T-cell (primary cell): ENCODE measurements at regions of chr3 and their contacts with region 1.

Region 1: DNA sequence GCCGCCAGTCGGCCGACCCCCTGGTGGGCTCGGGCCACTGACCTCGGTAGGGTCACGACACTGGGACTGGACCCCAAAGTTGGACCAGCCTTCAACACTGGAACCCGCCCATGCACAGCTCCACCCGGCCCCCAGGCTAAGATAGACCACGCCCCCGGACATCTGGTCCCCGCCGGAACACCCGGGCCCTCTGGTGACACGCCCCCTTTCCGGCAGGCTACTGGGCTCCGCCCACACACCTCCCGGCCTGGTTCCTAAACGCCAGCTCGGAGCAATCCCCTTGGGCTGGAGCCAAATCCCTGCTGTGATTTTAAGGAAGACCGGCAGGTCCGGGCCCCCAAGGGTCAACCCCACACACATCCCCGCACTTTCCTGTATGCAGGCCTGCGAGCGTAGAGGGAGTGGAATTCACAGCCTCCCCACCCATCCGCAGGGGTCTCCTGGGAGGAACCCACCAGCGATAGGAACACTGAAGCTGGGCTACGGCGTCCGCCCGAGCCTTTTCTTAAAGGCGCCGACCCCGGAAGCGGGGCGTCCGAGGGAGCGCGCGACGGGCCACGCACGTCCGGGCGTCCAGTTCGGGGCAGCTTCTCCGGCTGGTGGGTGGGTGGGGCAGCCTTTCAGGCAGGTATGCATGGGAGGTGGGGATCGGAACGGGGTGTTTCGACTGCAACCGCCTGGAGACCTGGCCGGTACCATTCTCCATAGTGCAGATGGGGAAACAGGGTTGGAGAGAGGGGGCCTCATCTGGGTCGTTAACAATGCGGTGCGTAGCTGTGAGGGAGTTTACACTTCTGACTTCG is at the start of gene HEMK1:
- DNase-seq: peak; percentile 74 to 94 (median 86)
- ATAC-seq: peak; percentile 58 to 69 (median 64)
- H3K4me3 ChIP-seq: peak within 1 kb of the TSS; percentile 90 to 95
- H3K4me3 Mint-ChIP-seq: peak within 1 kb of the TSS; percentile 84 to 93 (median 90)
- H3K27ac ChIP-seq: peak within 1 kb of the TSS; percentile 88
- H3K27ac Mint-ChIP-seq: peak within 1 kb of the TSS; percentile 97 to 98
- H3K4me1 ChIP-seq: peaks cover 34 to 74% of the 10 kb centered on the region in 2 experiments
- H3K4me1 Mint-ChIP-seq: peaks cover 62 to 76% (median 69%) of the 10 kb centered on the region in 3 donors
- H3K27me3 ChIP-seq: no peaks in the 10 kb centered on the region
- H3K27me3 Mint-ChIP-seq: no peaks in the 10 kb centered on the region
- total RNA-seq, gene HEMK1: 35.5 to 66.6 (median 42.0) TPM

Region 2: DNA sequence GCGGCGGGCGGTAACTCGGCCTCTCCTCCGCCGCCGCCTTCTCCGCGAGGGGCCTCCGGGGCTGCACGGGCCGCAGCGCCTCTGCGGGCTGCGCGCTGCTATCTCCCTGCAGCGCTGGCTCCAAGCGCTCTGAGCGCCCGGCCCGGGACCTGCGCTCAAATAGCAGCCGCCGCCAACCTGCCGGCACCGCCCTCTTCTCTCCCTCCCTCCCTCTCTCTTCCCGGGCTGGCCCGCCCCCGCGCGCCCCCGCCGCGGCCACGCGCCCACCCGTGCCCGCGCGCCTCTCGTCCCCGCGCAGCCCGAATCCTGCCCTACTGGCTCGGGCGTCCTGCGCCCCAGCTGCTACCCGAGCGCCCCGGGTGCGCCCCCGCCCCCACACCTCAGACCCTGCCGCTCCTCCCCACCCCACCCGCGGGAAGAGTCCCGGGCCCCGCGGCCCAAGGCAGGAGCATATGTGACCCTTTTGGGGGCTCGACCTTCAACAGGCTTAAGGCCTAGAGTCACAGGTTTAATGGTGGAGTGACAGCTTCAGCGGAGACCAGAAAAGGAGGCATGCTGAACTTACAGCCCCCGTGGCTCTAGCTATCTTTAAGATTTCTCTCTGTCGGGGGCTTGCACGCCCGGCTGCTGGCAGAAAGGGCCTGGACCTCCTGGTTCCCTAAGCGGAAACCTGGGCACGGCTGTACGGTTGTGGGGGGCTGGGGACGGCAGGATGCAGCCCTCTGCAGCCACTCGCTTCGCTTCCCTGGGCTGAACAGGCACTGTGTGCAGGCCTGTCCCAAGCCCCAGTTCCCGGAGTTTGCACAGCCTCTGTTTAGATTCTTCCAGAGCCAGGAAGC is 65.4 kb before region 1 on chr3 and contains the start of gene CACNA2D2:
- CTCF ChIA-PET with region 1: no interaction called
- POLR2A ChIA-PET with region 1: no interaction called
- DNase-seq: peak; percentile 45 to 82 (median 67)
- ATAC-seq: peak; percentile 86 to 91 (median 90)
- H3K4me3 ChIP-seq: peak within 1 kb of the TSS; percentile 52 to 58
- H3K4me3 Mint-ChIP-seq: peak within 1 kb of the TSS; percentile 69 to 77 (median 74)
- H3K27ac ChIP-seq: no peak within 1 kb of the TSS
- H3K27ac Mint-ChIP-seq: no peak within 1 kb of the TSS
- H3K4me1 ChIP-seq: peaks cover 0 to 18% of the 10 kb centered on the region in 2 experiments
- H3K4me1 Mint-ChIP-seq: peaks cover 8 to 10% (median 10%) of the 10 kb centered on the region in 3 donors
- H3K27me3 ChIP-seq: peaks cover 0 to 55% of the 10 kb centered on the region in 2 experiments
- H3K27me3 Mint-ChIP-seq: peaks cover 10 to 41% of the 10 kb centered on the region in 2 donors
- total RNA-seq, gene CACNA2D2: 2.6 to 8.9 (median 4.1) TPM

Region 3: DNA sequence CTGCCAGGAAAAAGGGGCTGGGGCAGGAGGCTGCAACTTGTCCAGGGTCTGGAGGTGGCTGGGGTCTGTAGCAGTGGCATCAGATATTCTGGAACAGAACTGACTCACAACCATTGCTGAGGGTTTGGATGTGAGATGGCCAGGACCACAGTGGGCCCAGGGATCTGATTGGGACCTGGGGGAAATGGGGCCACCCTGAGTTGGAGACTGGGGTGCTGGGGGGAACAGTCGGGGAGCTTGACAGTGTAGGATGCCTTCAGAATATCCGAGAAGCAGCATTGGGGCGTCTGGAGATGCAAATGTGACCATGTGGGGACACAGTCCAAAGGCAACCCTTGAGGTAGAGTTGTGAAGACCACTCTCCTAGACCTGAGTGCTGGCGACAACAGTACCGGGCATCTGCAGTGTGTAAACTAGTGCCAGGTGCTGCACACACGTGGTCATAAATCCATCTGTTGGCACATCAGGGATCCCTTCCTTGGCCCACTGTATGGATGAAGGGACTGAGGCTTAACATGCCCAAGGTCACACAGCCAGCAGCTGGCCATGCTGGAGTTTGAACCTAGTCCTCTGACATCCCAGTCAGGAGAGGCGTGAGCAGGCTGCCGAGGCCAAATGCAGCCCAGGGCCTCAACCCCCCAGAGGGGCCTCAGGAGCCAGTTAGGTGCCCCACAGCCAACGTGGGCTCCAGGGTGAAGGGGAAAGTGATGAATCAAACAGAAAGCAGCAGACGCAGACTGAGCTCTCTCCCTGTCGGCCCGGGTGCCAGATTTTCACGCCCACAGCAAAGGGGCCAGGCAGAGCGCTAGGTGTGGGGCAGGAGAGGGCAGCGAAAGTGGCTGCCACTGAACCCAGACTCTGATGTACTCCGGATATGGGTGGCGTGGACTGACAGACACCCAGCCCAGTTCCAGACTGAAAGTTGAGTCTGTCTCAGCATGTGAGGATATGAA is 18.9 kb after region 1 on chr3:
- CTCF ChIA-PET with region 1: interaction called, 3 to 40 read pairs
- POLR2A ChIA-PET with region 1: interaction called in 1 of 2 experiments, 3 read pairs
- DNase-seq: peak in 19 of 35 experiments; percentile 29 to 70 (median 49)
- ATAC-seq: peak; percentile 18 to 59 (median 36)
- H3K4me3 ChIP-seq: no peak overlapping the region
- H3K4me3 Mint-ChIP-seq: peak overlapping the region; percentile 13 to 69 (median 34)
- H3K27ac ChIP-seq: peak overlapping the region; percentile 59
- H3K27ac Mint-ChIP-seq: peak overlapping the region; percentile 88 to 93
- H3K4me1 ChIP-seq: peaks cover 21 to 83% of the 10 kb centered on the region in 2 experiments
- H3K4me1 Mint-ChIP-seq: peaks cover 52 to 76% (median 75%) of the 10 kb centered on the region in 3 donors
- H3K27me3 ChIP-seq: no peaks in the 10 kb centered on the region
- H3K27me3 Mint-ChIP-seq: no peaks in the 10 kb centered on the region

Region 4: DNA sequence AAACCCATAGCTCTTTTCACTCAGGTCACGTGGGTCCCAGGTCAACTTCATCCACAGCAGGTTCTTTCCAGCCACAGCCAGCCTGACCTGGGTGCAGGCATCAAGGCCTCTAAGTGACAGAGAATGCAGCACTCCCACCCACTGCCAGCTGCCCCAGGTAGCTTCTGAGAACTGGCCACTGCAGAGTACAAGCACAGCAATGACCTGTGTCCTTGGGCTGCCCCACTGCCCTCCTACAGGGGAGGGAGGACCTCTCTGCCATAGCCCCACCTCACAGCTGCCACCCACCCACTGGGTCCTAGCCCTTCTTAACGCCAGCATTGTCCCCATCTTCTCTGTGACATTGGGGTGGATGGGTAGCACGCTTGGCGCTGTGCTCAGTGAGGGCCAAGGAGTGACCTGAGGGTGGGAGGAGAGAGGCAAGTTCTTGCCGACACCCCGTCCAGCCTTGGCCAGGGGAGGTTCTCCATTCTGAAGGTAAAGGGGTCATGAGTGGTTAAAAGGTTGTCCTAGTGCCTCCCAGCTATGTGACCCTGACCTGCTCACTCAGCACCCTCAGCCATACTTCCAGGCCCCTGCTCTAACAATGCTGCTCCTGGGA is 30.1 kb after region 1 on chr3:
- CTCF ChIA-PET with region 1: interaction called, 3 to 10 read pairs
- POLR2A ChIA-PET with region 1: no interaction called
- DNase-seq: no peak
- ATAC-seq: no peak
- H3K4me3 ChIP-seq: no peak overlapping the region
- H3K4me3 Mint-ChIP-seq: peak overlapping the region in 1 of 3 donors; percentile 93
- H3K27ac ChIP-seq: no peak overlapping the region
- H3K27ac Mint-ChIP-seq: peak overlapping the region; percentile 99 to 100
- H3K4me1 ChIP-seq: peaks cover 37 to 68% of the 10 kb centered on the region in 2 experiments
- H3K4me1 Mint-ChIP-seq: peaks cover 70 to 82% (median 78%) of the 10 kb centered on the region in 3 donors
- H3K27me3 ChIP-seq: no peaks in the 10 kb centered on the region
- H3K27me3 Mint-ChIP-seq: no peaks in the 10 kb centered on the region